HCT116 (cell line): ENCODE measurements at regions of chr16 and their contacts with region 1.

Region 1: DNA sequence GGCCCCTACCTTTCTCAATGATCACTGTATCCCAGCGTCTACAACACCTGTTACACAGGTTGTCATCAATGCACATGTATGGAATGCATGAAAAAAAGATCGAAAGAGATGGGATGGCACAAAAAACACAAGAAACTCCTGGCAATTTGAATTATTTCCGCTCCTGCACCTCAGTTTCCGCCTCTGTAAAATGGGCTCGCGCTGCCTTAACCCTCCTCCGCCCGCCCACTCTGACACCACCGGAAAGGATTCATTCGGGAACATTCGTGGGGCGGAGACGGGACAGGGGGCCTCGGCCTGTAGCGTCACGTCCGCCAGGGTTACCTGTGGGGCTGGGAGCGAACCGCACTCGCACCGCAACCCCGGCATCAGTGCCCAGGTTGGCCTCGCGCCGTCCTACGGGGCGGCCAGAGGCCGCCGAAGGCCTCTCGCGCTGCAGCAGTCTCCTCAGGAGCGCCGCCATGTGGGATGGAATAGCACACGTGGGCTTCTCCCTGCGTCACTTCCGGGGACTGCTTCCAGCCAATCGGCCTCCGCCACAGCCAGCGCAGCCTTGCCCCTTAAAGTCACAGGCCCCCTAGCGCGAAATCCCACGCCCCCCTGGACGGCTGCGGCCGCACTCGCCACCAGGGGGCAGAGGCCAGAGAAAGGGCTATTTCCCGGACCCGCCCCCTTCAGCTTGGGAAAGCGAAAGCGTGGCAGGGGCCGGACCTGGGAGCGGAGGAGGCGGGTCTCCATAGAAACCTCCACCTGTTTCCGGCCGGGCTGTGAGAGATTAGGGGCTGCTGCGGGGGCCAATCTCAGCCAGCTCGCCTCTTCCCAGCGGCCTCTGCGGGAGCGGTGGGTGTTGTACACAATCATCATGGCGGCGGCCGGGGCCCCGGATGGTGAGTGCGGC is at the starts of genes EARS2 and UBFD1:
- DNase-seq: peak; percentile 97
- ATAC-seq: peak; percentile 92
- H3K4me3 ChIP-seq: peak within 1 kb of the TSS; percentile 69 to 73
- H3K27ac ChIP-seq: peak within 1 kb of the TSS; percentile 81
- H3K4me1 ChIP-seq: peaks cover 9 to 20% of the 10 kb centered on the region in 2 experiments
- H3K27me3 ChIP-seq: no peaks in the 10 kb centered on the region
- CTCF ChIP-seq: peak; percentile 79 to 94 (median 89)
- POLR2A ChIP-seq: peak; percentile 83
- RAD21 ChIP-seq: peak; percentile 57
- total RNA-seq, gene EARS2: 35.6 TPM
- total RNA-seq, gene UBFD1: 89.6 TPM

Region 2: GRCh38 chr16:23595951-23596720 is 39.0 kb after region 1 on chr16 and contains the start of gene NDUFAB1:
- CTCF ChIA-PET with region 1: interaction called, 30 read pairs
- POLR2A ChIA-PET with region 1: interaction called, 8 read pairs
- RAD21 ChIA-PET with region 1: no interaction called
- intact Hi-C with region 1: loop called (anchors 1 kb)
- DNase-seq: peak; percentile 67
- ATAC-seq: peak; percentile 88
- H3K4me3 ChIP-seq: peak within 1 kb of the TSS; percentile 85 to 100
- H3K27ac ChIP-seq: peak within 1 kb of the TSS; percentile 77
- H3K4me1 ChIP-seq: peaks cover 16 to 25% of the 10 kb centered on the region in 2 experiments; a peak in 3 of 4 replicates
- H3K27me3 ChIP-seq: no peaks in the 10 kb centered on the region
- CTCF ChIP-seq: peak; percentile 68 to 99 (median 82)
- POLR2A ChIP-seq: peak; percentile 55
- RAD21 ChIP-seq: 0 out of 2 replicates have a peak, but pooled peaks have one; percentile 31
- total RNA-seq, gene NDUFAB1: 169 TPM

Region 3: DNA sequence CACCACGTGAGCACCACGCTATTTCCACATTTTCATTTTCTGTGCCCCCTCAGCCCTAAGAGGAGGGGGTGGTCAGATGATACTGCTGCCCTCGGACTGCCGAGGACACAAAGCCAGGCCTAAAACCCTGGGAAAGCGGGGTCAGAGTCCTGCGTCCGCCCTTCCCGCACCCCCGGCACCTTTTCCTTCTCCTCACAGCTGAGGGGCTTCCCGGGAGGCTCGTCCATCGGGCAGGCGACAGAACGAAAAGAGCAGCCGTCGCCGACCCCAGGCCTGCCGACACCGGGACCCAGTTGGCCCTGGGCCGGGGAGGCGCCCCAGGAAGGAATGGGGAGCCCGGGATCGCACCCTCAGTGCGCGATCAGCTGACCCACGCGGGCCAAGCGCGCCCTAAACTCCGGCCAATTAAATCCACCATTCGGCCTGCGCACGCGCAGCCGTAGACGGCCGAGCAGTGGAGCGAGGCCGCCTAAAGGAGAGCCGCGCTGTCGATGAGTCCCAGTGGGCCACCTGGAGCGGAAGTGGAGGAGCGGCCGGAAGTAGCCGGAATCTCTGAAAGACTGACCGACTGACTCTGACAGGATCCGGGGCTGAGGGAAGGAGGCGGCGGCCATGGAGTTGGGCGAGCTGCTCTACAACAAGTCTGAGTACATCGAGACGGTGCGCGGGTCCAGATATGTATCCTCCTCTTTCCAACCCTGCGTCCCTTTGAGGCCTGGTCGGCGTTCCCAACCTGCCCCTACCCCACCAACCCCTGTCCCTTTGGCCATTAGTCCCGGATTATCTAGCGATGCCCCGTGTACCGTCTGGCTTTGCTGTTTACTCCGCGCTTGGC is 84.0 kb after region 1 on chr16 and contains the starts of genes DCTN5 and PALB2:
- CTCF ChIA-PET with region 1: no interaction called
- POLR2A ChIA-PET with region 1: no interaction called
- RAD21 ChIA-PET with region 1: no interaction called
- intact Hi-C with region 1: loop called (anchors 1 kb)
- DNase-seq: peak; percentile 81
- ATAC-seq: peak; percentile 97
- H3K4me3 ChIP-seq: peak within 1 kb of the TSS; percentile 70 to 100
- H3K27ac ChIP-seq: peak within 1 kb of the TSS; percentile 70
- H3K4me1 ChIP-seq: peaks cover 2 to 23% of the 10 kb centered on the region in 2 experiments; a peak in 3 of 4 replicates
- H3K27me3 ChIP-seq: no peaks in the 10 kb centered on the region
- CTCF ChIP-seq: no peak
- POLR2A ChIP-seq: peak; percentile 61
- RAD21 ChIP-seq: no peak
- total RNA-seq, gene DCTN5: 42.9 TPM
- total RNA-seq, gene PALB2: 15.6 TPM

Region 4: GRCh38 chr16:23729503-23730424 is 172.6 kb after region 1 on chr16:
- CTCF ChIA-PET with region 1: no interaction called
- POLR2A ChIA-PET with region 1: no interaction called
- RAD21 ChIA-PET with region 1: no interaction called
- intact Hi-C with region 1: loop called (anchors 2 kb)
- DNase-seq: peak; percentile 31
- ATAC-seq: peak; percentile 58
- H3K4me3 ChIP-seq: no peak overlapping the region
- H3K27ac ChIP-seq: no peak overlapping the region
- H3K4me1 ChIP-seq: peaks cover 7 to 23% of the 10 kb centered on the region in 2 experiments; a peak in 3 of 4 replicates
- H3K27me3 ChIP-seq: no peaks in the 10 kb centered on the region
- CTCF ChIP-seq: no peak
- POLR2A ChIP-seq: no peak
- RAD21 ChIP-seq: no peak

Region 5: GRCh38 chr16:24036614-24037013 is 479.5 kb after region 1 on chr16:
- CTCF ChIA-PET with region 1: interaction called, 5 read pairs
- POLR2A ChIA-PET with region 1: no interaction called
- RAD21 ChIA-PET with region 1: no interaction called
- intact Hi-C with region 1: loop called (anchors 1 kb)
- DNase-seq: peak; percentile 29
- ATAC-seq: peak; percentile 86
- H3K4me3 ChIP-seq: no peak overlapping the region
- H3K27ac ChIP-seq: no peak overlapping the region
- H3K4me1 ChIP-seq: no peaks in the 10 kb centered on the region
- H3K27me3 ChIP-seq: no peaks in the 10 kb centered on the region
- CTCF ChIP-seq: peak; percentile 61 to 79 (median 65)
- POLR2A ChIP-seq: no peak
- RAD21 ChIP-seq: peak; percentile 88

Region 6: GRCh38 chr16:24539291-24539849 is 982.2 kb after region 1 on chr16 and contains the start of gene RBBP6:
- CTCF ChIA-PET with region 1: no interaction called
- POLR2A ChIA-PET with region 1: no interaction called
- RAD21 ChIA-PET with region 1: no interaction called
- intact Hi-C with region 1: loop called (anchors 10 kb)
- DNase-seq: peak; percentile 93
- ATAC-seq: peak; percentile 88
- H3K4me3 ChIP-seq: peak within 1 kb of the TSS; percentile 66 to 80
- H3K27ac ChIP-seq: peak within 1 kb of the TSS; percentile 95
- H3K4me1 ChIP-seq: peaks cover 22 to 33% of the 10 kb centered on the region in 2 experiments
- H3K27me3 ChIP-seq: no peaks in the 10 kb centered on the region
- CTCF ChIP-seq: peak; percentile 9 to 21 (median 11); a peak in 2 of 6 replicates
- POLR2A ChIP-seq: peak; percentile 94
- RAD21 ChIP-seq: no peak
- total RNA-seq, gene RBBP6: 52.4 TPM

Region 7: GRCh38 chr16:24863582-24864437 is 1306.7 kb after region 1 on chr16:
- CTCF ChIA-PET with region 1: no interaction called
- POLR2A ChIA-PET with region 1: no interaction called
- RAD21 ChIA-PET with region 1: no interaction called
- intact Hi-C with region 1: no loop called
- DNase-seq: no peak
- ATAC-seq: no peak
- H3K4me3 ChIP-seq: no peak overlapping the region
- H3K27ac ChIP-seq: no peak overlapping the region
- H3K4me1 ChIP-seq: no peaks in the 10 kb centered on the region
- H3K27me3 ChIP-seq: no peaks in the 10 kb centered on the region
- CTCF ChIP-seq: no peak
- POLR2A ChIP-seq: no peak
- RAD21 ChIP-seq: no peak